Cardiac septum (tissue), 1 donor: ENCODE measurements at regions of chr1 and their contacts with region 1.

Region 1: GRCh38 chr1:171715813-171716251 is 26.0 kb downstream of the VAMP4 start:
- DNase-seq: no peak

Region 2: GRCh38 chr1:171781176-171781875 is 65.5 kb after region 1 on chr1 and contains the start of gene METTL13:
- intact Hi-C with region 1: loop called (anchors 2 kb)
- DNase-seq: peak; percentile 100
- total RNA-seq, gene METTL13: 14.4 TPM

Region 3: GRCh38 chr1:171841050-171841940 is 125.5 kb after region 1 on chr1 and contains the start of gene DNM3:
- intact Hi-C with region 1: no loop called
- DNase-seq: peak; percentile 90
- total RNA-seq, gene DNM3: 2.4 TPM